Upper lobe of right lung (tissue), 1 donor: ENCODE measurements at regions of chr9 and their contacts with region 1.

Region 1: GRCh38 chr9:128845155-128845931 is 15.7 kb upstream of the SPOUT1 start:
- DNase-seq: no peak
- ATAC-seq: peak; percentile 35
- H3K4me3 ChIP-seq: no peak overlapping the region
- H3K27ac ChIP-seq: no peak overlapping the region
- H3K4me1 ChIP-seq: no peaks in the 10 kb centered on the region
- H3K27me3 ChIP-seq: no peaks in the 10 kb centered on the region
- CTCF ChIP-seq: no peak

Region 2: GRCh38 chr9:128628471-128629048 is 216.8 kb before region 1 on chr9:
- intact Hi-C with region 1: no loop called
- DNase-seq: no peak
- ATAC-seq: peak; percentile 56
- H3K4me3 ChIP-seq: no peak overlapping the region
- H3K27ac ChIP-seq: no peak overlapping the region
- H3K4me1 ChIP-seq: peaks cover 9% of the 10 kb centered on the region
- H3K27me3 ChIP-seq: no peaks in the 10 kb centered on the region
- CTCF ChIP-seq: no peak

Region 3: DNA sequence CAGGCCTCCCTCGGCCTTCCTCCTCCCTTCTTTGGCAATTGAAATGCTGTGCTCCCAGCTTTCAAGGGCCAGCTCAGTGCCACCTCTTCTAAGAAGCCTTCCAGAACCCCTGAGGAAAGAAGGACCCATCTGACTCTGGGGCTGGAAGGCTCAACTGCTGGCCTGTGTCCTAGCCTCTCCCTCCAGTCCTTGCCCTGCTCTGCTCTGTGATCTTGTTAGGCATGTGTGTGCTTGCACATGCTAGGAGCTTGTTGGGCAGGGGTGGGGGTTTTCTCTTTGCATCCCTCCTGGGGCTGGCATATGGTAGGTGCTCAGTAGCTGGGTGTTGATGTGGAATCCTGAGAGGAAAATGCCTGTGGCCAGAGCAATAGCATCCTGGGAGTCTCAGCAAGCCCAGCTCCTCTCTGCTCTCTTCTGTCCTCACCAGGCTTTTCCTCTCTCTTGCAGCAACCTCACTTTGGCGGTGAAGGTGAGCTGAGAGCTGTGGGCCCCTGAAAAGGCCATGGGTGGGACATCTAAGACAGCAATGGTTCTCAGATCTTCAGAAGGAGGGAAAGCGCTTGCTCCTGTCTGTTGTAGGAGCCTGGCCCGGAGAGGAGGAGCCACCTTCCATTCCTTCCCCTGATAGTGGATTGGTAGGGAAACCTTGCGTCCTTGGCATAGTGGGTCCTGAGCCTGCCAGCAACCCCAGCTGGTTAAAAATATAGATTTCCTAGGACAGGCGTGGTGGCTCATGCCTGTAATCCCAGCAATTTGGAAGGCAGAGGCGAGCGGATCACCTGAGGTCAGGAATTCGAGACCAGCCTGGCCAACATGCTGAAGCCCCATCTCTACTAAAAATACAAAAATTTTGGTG is 92.2 kb after region 1 on chr9:
- intact Hi-C with region 1: loop called (anchors 5 kb)
- DNase-seq: no peak
- ATAC-seq: no peak
- H3K4me3 ChIP-seq: no peak overlapping the region
- H3K27ac ChIP-seq: no peak overlapping the region
- H3K4me1 ChIP-seq: peaks cover 3% of the 10 kb centered on the region
- H3K27me3 ChIP-seq: no peaks in the 10 kb centered on the region
- CTCF ChIP-seq: no peak